ENCODE measurements at regions of chr11 and their contacts with region 1.

Region 1: DNA sequence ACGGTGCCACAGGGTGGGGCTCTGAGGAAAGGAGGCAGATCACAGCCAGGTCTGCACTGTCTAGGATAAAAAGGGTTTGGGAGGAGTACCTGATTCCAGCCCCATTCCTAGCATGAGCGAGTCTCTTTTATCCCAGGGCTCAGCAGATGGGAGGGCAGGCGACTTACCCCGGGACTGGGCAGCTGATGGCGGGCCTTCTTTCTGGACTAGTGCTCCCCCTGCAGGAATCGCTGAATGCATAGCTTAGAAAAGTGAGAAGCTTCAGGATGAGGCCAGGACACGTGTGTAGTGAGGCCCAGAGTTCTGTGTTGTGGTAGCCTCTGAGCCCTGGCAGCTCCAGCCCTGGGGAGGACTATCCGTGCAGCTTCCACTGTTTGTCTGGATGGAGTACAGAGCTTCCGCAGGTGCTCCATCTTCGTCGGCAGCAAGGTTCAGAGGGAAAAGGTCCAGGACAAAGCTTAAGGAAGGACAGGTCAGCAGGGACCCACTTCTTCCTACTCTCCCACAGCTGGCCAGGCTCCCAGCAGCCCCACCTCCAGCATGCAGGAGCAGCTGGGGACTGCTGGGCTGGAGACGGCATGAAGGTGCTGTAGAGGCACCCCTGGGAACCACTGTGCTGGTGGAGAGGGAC is 30.4 kb downstream of the COMMD9 start:
- DNase-seq: peak; percentile 52
- H3K4me3 ChIP-seq: no peak overlapping the region
- CTCF ChIP-seq: peak; percentile 79

Region 2: DNA sequence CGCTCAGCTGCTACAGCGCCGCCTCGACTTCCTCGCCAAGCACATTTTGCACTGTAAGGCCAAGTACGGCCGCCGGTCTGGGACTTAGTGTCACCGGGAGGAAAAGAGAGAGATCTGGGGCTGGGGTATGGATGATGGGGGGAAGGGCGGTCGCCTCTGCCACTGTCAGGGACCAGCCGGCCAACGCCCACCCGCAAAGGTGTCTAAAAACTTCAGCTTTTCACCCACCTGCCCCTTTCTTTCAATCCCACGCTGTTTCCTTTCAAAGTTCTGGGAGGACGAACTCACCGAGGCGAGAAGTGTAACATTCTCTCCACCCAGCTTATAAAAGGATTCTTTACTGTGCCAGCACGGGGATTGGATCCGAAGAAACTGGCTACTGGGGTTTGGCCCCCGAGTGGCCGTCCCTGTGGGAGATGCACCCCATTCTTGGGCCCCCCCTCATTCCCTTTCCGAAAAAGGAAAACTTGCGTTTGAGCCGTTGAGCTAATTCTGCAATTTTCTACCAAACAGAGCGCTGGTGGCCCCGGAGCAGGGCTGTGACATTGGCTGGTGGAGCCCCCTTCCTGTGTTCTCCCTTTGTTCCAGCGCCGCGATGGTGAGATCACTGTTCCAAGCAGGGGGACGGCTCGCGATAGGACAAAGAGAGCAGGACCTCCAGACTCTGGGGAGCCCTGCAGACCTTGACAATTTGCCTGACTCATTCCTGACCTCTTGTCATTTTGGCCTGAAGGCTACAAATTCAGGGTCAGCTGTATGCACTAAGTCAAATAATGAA is 638.8 kb before region 1 on chr11:
- in situ Hi-C with region 1: loop called (anchors 10 kb)
- DNase-seq: no peak
- H3K4me3 ChIP-seq: peak overlapping the region; percentile 52
- CTCF ChIP-seq: no peak

Measured in astrocyte of the cerebellum (primary cell).